ENCODE measurements at regions of chr19 and their contacts with region 1.

Region 1: DNA sequence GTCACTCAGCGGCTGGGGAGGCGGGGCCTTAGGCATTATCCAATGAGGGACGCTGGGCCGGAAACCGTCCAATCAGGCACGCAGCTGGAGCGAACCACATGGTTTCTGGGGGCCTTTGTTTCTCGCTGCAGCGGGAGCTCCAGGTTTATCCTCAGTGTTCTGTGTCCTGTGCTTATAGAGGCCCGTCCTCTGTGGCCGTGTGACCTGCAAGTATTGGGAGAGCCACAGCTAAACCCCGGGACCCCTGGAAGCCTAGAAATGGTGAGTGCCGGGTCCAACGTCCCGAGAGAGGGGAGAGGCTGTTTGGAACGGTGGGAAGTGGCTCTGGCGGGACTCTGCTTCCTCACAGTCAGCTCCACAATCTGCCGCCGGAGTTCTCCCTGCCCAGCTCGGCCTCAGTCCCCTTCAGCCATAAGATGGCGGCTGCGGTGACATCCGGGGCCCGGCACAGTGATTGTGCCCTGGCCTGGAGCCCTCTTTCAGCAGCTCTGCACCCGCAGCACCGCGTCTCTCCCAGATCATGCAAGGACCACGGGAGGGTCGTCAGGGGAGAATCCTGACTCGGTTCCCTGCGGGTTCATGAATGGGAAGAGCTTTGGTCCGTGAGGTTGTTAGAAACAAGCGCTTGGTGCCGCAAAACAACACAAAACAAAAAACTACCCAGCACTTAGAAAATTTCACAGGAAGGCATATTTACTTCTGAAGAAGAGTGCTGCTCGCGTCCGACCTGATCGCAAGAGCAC is at the start of gene ZNF253:
- DNase-seq: peak; percentile 89
- H3K4me3 ChIP-seq: peak within 1 kb of the TSS; percentile 82 to 93 (median 91)
- H3K27ac ChIP-seq: peak within 1 kb of the TSS; percentile 60
- H3K4me1 ChIP-seq: no peaks in the 10 kb centered on the region
- H3K27me3 ChIP-seq: no peaks in the 10 kb centered on the region
- CTCF ChIP-seq: no peak
- POLR2A ChIP-seq: no peak
- total RNA-seq, gene ZNF253: 3.9 and 8.4 TPM in 2 replicates

Region 2: DNA sequence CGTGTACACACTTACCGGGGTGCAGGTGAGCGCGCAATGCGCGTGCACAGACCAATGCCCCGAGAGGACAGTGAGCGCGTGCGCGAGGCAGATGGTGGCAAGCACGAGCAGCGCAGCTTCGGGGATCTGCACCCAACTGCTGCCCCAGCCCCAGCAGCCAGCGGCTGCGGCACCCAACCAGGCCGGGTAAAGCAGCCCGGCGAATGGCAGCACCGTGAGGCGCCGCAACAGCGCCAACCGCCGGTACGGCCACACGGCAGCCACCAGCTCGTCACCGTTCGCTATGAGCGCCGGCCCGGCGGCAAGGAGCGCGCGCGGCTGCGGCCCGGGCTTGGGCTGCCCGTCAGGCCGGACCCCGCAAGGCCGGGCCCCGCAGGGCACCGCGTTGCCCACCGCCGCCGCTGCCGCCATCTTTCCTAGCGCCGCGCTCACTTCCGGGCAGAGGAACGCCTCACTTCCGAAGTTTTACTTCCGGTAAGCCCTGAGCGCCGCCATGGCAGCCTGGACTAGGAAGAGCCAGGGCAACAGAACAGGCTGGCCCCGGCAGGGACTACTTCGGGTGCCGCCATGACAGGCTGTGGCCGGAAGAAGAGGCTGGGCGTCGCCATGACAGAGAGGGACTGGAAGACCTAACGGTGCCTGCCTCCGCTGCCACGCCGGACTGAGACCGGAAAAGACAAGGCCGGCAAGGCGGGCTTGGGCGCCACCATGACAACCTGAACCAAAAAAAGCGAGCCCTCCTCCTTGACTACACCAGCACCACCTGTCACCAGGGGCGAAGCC is 202.5 kb before region 1 on chr19 and contains the start of gene ATP13A1:
- CTCF ChIA-PET with region 1: no interaction called
- POLR2A ChIA-PET with region 1: interaction called, 3 read pairs
- dilution Hi-C with region 1: no loop called
- intact Hi-C with region 1: loop called (anchors 2 kb)
- DNase-seq: peak; percentile 96
- H3K4me3 ChIP-seq: peak within 1 kb of the TSS; percentile 3 to 57 (median 56)
- H3K27ac ChIP-seq: peak within 1 kb of the TSS; percentile 77
- H3K4me1 ChIP-seq: peaks cover 9% of the 10 kb centered on the region
- H3K27me3 ChIP-seq: no peaks in the 10 kb centered on the region
- CTCF ChIP-seq: peak in 1 of 2 donors; percentile 34
- POLR2A ChIP-seq: peak; percentile 75
- total RNA-seq, gene ATP13A1: 48.7 and 56.8 TPM in 2 replicates

Region 3: DNA sequence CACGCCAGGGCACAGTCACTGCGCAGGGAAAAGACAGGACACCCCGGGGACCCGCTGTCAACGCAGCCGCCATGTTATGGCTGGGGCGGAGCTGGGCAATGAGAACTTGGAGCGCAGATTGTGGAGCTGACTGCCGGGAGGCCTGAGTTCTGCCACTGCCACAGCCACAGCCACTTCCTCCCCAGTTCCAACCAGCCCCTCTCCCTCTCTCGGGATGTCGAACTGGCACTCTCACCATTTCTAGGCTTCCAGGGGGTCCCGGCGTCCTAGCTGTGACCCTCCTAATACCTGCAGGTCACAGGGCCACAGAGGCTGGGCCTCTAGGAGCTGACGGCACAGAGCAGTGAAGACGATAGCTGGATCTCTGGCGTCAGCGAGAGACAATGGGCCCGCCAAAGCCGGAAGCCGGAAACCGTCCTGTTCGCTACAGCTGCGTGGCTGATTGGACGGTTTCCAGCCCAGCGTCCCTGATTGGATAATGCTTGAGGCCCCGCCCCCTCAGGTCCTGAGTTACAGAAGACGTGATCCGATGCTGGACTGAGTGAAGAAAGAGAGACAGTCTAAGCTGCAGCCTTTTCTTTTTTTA is 44.5 kb before region 1 on chr19 and contains the start of gene ZNF506:
- CTCF ChIA-PET with region 1: no interaction called
- POLR2A ChIA-PET with region 1: interaction called, 9 read pairs
- dilution Hi-C with region 1: no loop called
- intact Hi-C with region 1: loop called (anchors 2 kb)
- DNase-seq: peak; percentile 87
- H3K4me3 ChIP-seq: peak within 1 kb of the TSS in 2 of 3 experiments; percentile 55 to 61
- H3K27ac ChIP-seq: peak within 1 kb of the TSS; percentile 31
- H3K4me1 ChIP-seq: no peaks in the 10 kb centered on the region
- H3K27me3 ChIP-seq: no peaks in the 10 kb centered on the region
- CTCF ChIP-seq: no peak
- POLR2A ChIP-seq: peak; percentile 83
- total RNA-seq, gene ZNF506: 5.6 and 10.7 TPM in 2 replicates

Region 4: DNA sequence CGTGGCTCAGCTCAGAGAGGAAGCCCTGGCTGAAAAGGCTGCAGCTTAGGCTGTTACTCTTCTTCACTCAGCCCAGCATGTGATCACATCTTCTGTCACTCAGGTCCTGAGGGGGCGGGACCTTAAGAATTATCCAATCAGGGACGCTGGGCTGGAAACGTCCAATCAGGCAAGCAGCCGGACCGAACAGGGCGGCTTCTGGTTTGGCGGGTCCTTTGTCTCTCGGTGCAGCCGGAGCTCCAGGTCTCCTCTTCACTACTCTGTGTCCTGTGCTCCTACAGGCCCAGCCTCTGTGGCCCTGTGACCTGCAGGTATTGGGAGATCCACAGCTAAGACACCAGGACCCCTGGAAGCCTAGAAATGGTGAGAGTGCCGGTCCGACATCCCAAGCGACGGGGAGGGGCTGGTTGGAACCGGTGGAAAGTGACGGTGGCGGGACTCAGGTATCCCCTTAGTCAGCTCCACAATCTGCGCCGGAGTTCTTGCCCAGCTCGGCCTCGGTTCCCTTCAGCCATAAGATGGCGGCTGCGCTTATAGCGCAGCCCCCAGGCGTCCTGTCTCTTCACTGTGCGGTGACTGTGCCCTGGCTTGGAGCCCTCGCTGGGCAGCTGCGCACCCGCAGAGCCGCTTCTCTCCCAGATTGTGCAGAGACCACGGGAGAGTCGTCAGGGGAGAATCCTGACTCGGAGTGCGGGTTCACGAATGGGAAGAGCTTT is 35.0 kb after region 1 on chr19 and contains the start of gene ZNF93:
- CTCF ChIA-PET with region 1: no interaction called
- POLR2A ChIA-PET with region 1: interaction called, 8 read pairs
- dilution Hi-C with region 1: no loop called
- intact Hi-C with region 1: loop called (anchors 2 kb)
- DNase-seq: peak; percentile 92
- H3K4me3 ChIP-seq: peak within 1 kb of the TSS; percentile 53 to 77 (median 72)
- H3K27ac ChIP-seq: peak within 1 kb of the TSS; percentile 79
- H3K4me1 ChIP-seq: no peaks in the 10 kb centered on the region
- H3K27me3 ChIP-seq: no peaks in the 10 kb centered on the region
- CTCF ChIP-seq: no peak
- POLR2A ChIP-seq: no peak
- total RNA-seq, gene ZNF93: 5.6 and 9.9 TPM in 2 replicates

Region 5: GRCh38 chr19:20051841-20052768 is 186.2 kb after region 1 on chr19:
- CTCF ChIA-PET with region 1: no interaction called
- POLR2A ChIA-PET with region 1: no interaction called
- dilution Hi-C with region 1: no loop called
- intact Hi-C with region 1: no loop called
- DNase-seq: peak; percentile 92
- H3K4me3 ChIP-seq: peak overlapping the region in 2 of 3 experiments; percentile 41 to 57
- H3K27ac ChIP-seq: no peak overlapping the region
- H3K4me1 ChIP-seq: no peaks in the 10 kb centered on the region
- H3K27me3 ChIP-seq: no peaks in the 10 kb centered on the region
- CTCF ChIP-seq: no peak
- POLR2A ChIP-seq: no peak

Region 6: GRCh38 chr19:20067943-20068342 is 202.0 kb after region 1 on chr19:
- CTCF ChIA-PET with region 1: no interaction called
- POLR2A ChIA-PET with region 1: no interaction called
- dilution Hi-C with region 1: no loop called
- intact Hi-C with region 1: no loop called
- DNase-seq: no peak
- H3K4me3 ChIP-seq: no peak overlapping the region
- H3K27ac ChIP-seq: no peak overlapping the region
- H3K4me1 ChIP-seq: no peaks in the 10 kb centered on the region
- H3K27me3 ChIP-seq: no peaks in the 10 kb centered on the region
- CTCF ChIP-seq: no peak
- POLR2A ChIP-seq: no peak

Measured in endothelial cell of umbilical vein (primary cell).